H1 (cell line): ENCODE measurements at regions of chr11 and their contacts with region 1.

Region 1: DNA sequence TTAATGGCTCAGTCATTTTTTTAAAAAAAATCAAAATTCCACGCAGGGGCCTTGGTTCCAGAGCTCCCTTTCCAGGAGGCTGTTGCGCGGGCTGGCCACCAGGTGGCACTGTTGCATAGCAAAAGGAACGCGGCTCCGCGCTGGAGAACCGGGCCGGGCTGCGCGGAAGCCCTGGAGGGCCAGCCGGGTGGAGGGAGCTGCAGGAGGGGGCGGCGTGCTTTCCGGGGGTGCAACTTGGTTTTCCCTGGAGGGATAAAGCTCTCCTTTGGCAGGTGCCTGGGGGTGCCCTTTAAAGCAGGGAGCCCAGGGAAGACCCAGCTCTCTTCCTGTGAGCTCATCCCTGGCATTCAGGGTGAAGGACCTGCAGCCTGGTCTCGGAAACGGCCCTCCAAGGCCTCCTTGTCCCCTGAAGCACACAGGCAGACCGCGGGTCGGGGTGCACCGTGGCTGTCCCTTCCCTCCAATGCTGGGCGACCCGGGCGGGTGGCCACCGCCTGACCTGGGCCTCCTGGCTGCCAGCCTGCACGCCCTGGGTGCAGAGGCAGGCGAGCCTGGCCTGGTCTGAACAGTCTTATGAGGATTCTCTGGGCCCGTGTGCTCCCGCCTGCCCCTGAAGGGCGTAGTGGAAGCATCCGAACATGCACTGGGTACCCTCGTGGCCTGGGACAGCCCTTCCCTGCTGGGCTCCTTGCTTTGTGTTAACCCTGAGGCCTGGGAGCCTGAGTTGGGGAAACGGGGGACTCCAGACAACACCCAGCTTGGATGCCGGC is 23.4 kb downstream of the KRTAP5-5 start:
- DNase-seq: peak in 1 of 2 experiments; percentile 95
- H3K4me3 ChIP-seq: peak overlapping the region in 3 of 4 experiments; percentile 19 to 53 (median 26); a peak in 4 of 8 replicates
- H3K27ac ChIP-seq: no peak overlapping the region
- H3K4me1 ChIP-seq: peaks cover 0 to 6% (median 2%) of the 10 kb centered on the region in 4 experiments; a peak in 3 of 7 replicates
- H3K27me3 ChIP-seq: peaks cover 0 to 9% (median 6%) of the 10 kb centered on the region in 4 experiments; a peak in 4 of 7 replicates
- CTCF ChIP-seq: peak; percentile 76 to 92 (median 88)
- EP300 ChIP-seq: no peak
- POLR2A ChIP-seq: no peak
- RAD21 ChIP-seq: peak; percentile 94 to 97

Region 2: GRCh38 chr11:1401656-1402221 is 251.2 kb before region 1 on chr11:
- CTCF ChIA-PET with region 1: no interaction called
- POLR2A ChIA-PET with region 1: no interaction called
- DNase-seq: peak in 1 of 2 experiments; percentile 92
- H3K4me3 ChIP-seq: no peak overlapping the region
- H3K27ac ChIP-seq: no peak overlapping the region
- H3K4me1 ChIP-seq: peaks cover 0 to 2% (median 0%) of the 10 kb centered on the region in 4 experiments; a peak in 1 of 7 replicates
- H3K27me3 ChIP-seq: no peaks in the 10 kb centered on the region
- CTCF ChIP-seq: no peak
- EP300 ChIP-seq: no peak
- POLR2A ChIP-seq: no peak
- RAD21 ChIP-seq: peak in 1 of 2 experiments; percentile 7; a peak in 2 of 4 replicates

Region 3: DNA sequence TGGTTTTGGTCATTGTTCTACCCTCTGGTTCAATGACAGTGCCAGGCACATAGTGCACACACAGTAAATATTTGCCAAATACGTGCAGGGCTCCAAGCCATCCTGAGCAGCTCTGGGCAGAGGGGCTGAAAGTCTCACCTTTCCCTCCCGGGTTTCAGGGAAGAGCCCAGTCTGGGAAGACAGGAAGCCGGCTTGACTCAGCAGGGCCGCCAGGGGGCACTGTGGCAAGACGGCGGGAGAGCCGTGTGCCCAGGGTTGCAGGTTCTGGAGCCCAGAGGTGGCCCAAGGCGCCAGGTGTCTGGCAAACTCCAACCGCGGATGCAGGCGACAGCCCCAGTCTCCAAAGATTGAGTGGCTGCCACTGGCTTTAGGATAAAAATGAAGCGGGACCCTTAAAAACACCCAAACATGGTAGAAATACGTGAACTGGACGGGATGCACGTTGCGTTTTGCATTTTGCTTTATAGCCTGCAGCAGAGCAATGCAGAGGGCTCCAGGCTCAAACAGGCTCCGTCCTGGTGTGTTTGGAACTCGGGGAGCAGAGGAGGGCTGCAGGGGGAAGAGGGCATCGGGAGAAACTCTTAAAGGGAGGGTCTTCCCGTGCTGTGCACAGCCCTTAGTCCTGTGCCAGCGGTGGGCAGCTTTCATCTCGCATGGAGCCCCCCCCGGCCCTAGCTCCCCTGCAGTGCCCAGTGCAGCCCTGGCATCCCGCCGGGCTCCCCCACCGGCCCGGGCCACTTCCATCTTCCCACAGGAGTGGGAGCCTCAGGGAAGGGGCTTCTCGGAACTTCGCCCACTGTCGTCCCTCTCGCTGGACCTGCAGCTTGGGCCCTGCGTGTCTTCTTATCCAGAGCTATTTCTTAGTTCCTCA is 12.6 kb before region 1 on chr11:
- CTCF ChIA-PET with region 1: interaction called, 19 read pairs
- POLR2A ChIA-PET with region 1: no interaction called
- DNase-seq: peak; percentile 58 to 87
- H3K4me3 ChIP-seq: no peak overlapping the region
- H3K27ac ChIP-seq: no peak overlapping the region
- H3K4me1 ChIP-seq: no peaks in the 10 kb centered on the region; a peak in 1 of 7 replicates
- H3K27me3 ChIP-seq: no peaks in the 10 kb centered on the region; a peak in 1 of 7 replicates
- CTCF ChIP-seq: peak; percentile 86 to 92 (median 89)
- EP300 ChIP-seq: no peak
- POLR2A ChIP-seq: no peak
- RAD21 ChIP-seq: peak; percentile 42 to 60; a peak in 3 of 4 replicates

Region 4: DNA sequence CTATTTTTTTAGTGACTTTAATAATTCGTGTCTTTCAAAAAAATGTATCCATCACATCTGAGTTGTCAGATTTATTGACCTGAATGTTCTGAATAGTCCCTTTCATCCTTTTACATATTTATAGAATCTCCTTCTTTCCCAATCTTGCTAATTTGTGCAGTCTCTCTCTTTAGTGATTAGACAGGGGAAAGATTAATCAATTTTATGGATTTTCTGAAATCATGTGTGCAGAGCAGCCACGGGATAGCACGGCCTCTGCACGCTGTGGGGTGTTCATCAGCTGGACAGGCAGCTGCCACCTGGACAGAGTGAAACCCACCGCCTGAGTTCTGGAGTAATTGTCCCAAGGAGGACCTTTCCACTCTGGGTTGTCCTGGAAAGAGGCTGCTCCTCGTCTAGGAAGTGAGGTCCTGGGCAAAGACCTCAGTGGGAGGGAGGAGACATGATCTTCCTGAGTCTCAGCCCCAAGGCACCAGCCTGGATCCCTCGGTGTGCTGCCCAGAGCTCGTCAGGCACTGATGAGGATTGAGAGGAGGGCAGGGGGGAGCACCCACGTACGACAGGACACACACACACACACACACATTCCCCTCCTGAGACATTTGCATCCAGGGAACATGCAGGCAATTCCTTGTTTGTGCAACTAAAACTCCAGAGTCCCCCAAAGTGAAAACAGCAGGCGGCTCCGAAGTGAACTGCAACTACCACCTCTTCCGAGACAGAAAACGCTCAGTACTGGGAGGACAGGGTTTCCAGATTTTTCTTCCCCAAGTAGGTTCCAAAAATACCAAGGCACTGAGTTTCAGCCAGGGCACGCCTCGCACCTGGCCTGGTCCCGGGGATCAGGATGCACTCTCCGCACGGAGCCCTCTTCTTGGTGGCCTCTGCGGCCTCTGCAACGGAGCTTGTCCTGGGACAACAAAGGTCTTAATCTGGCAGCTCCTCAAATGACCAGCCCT is 21.5 kb after region 1 on chr11:
- CTCF ChIA-PET with region 1: interaction called, 16 read pairs
- POLR2A ChIA-PET with region 1: no interaction called
- DNase-seq: no peak
- H3K4me3 ChIP-seq: no peak overlapping the region
- H3K27ac ChIP-seq: no peak overlapping the region
- H3K4me1 ChIP-seq: no peaks in the 10 kb centered on the region; a peak in 1 of 7 replicates
- H3K27me3 ChIP-seq: peaks cover 0 to 4% (median 0%) of the 10 kb centered on the region in 4 experiments; a peak in 3 of 7 replicates
- CTCF ChIP-seq: no peak
- EP300 ChIP-seq: no peak
- POLR2A ChIP-seq: no peak
- RAD21 ChIP-seq: no peak

Region 5: DNA sequence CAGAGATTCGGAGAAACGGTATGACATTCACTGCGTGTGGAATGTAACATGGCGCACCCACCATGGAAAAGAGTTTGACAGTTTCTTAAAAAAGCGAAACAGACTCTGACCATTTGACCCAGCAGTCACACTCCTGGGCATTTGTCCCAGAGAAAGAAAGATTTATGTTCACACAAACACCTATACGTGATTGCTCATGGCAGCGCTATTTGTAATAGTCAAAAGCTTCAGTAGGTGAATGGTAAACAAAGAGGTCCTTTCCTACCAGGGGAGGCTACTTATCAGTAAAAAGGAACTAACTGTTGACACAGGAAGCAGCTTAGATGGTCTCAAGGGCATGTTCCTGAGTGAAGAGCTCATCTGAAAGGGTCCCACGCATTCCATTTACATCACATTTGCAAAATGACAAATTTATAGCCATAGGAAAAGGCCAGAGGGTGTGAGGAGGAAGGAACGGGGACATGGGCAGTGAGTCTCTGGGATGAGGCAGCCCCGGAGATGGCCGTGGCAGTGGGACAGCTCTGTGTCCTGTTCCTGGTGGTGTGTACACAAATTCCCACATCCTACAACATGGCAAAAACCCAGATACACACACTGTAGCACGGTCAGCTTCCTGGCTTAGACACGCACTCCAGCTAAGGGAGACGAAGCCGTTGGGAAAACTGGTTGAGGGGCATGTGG is 29.4 kb after region 1 on chr11:
- CTCF ChIA-PET with region 1: interaction called, 16 read pairs
- POLR2A ChIA-PET with region 1: no interaction called
- DNase-seq: no peak
- H3K4me3 ChIP-seq: no peak overlapping the region
- H3K27ac ChIP-seq: no peak overlapping the region; the same call in 1 of the 2 replicates
- H3K4me1 ChIP-seq: no peaks in the 10 kb centered on the region
- H3K27me3 ChIP-seq: no peaks in the 10 kb centered on the region
- CTCF ChIP-seq: no peak
- EP300 ChIP-seq: no peak
- POLR2A ChIP-seq: no peak
- RAD21 ChIP-seq: no peak

Region 6: GRCh38 chr11:1837171-1838076 is 184.5 kb after region 1 on chr11:
- CTCF ChIA-PET with region 1: interaction called, 117 read pairs
- POLR2A ChIA-PET with region 1: no interaction called
- DNase-seq: peak; percentile 50 to 90
- H3K4me3 ChIP-seq: no peak overlapping the region
- H3K27ac ChIP-seq: no peak overlapping the region
- H3K4me1 ChIP-seq: peaks cover 0 to 4% (median 2%) of the 10 kb centered on the region in 4 experiments; a peak in 4 of 7 replicates
- H3K27me3 ChIP-seq: no peaks in the 10 kb centered on the region; a peak in 2 of 7 replicates
- CTCF ChIP-seq: peak; percentile 91 to 94 (median 94)
- EP300 ChIP-seq: no peak
- POLR2A ChIP-seq: no peak
- RAD21 ChIP-seq: peak; percentile 92 to 93

Region 7: GRCh38 chr11:1882519-1883238 is 229.7 kb after region 1 on chr11:
- CTCF ChIA-PET with region 1: interaction called, 13 read pairs
- POLR2A ChIA-PET with region 1: no interaction called
- DNase-seq: peak; percentile 54 to 94
- H3K4me3 ChIP-seq: no peak overlapping the region
- H3K27ac ChIP-seq: no peak overlapping the region
- H3K4me1 ChIP-seq: peaks cover 0 to 5% (median 2%) of the 10 kb centered on the region in 4 experiments; a peak in 3 of 7 replicates
- H3K27me3 ChIP-seq: no peaks in the 10 kb centered on the region; a peak in 1 of 7 replicates
- CTCF ChIP-seq: peak; percentile 91 to 94 (median 92)
- EP300 ChIP-seq: no peak
- POLR2A ChIP-seq: no peak
- RAD21 ChIP-seq: peak; percentile 89 to 94